ENCODE measurements at regions of chr16 and their contacts with region 1.

Region 1: DNA sequence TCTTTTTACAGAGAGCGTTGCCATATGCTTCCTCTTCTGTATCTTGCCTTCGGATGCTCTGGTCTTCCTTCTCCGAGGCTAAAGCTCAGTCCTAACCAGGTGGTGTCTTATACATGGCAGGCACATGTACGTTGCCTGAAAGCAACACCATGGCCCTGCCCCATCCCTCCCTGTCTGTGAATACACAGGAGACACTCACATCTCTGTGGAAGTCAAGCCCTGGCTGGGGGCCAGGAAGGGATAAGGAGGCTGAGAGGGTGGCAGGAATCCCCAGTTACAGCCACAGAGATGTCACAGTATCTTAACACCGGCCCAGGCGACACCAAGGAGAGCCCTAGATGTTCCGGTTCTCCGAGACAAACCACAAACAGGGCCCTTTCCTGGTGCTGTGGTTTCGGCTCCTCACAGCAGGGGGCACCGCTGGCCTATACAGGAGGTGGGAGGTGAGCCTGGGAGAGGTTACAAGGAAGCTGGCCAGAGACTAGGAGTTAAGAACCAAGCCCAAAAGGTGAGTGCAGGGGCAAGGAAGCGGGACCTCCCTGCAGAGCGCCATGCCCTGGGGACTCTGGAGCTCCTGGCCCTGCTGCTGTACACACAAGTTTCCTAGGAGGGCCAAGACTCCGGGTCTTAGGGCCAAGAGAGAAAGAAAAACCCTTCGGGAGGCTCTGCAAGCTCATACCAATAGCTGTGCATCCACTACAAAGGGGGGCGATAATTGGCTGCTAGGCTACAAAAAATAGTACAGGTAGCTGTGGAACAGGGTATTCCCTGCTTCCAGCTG is 41.7 kb downstream of the SRL start:
- DNase-seq: peak; percentile 73 to 88
- H3K4me3 ChIP-seq: no peak overlapping the region
- H3K27ac ChIP-seq: no peak overlapping the region
- H3K4me1 ChIP-seq: peaks cover 7% of the 10 kb centered on the region
- H3K27me3 ChIP-seq: no peaks in the 10 kb centered on the region
- CTCF ChIP-seq: peak; percentile 70

Region 2: GRCh38 chr16:3715430-3715829 is 484.8 kb before region 1 on chr16:
- CTCF ChIA-PET with region 1: interaction called, 17 read pairs
- POLR2A ChIA-PET with region 1: no interaction called
- intact Hi-C with region 1: no loop called
- DNase-seq: no peak
- H3K4me3 ChIP-seq: no peak overlapping the region
- H3K27ac ChIP-seq: no peak overlapping the region
- H3K4me1 ChIP-seq: peaks cover 10% of the 10 kb centered on the region
- H3K27me3 ChIP-seq: no peaks in the 10 kb centered on the region
- CTCF ChIP-seq: no peak

Region 3: GRCh38 chr16:4064950-4065352 is 135.2 kb before region 1 on chr16:
- CTCF ChIA-PET with region 1: no interaction called
- POLR2A ChIA-PET with region 1: no interaction called
- intact Hi-C with region 1: no loop called
- DNase-seq: no peak
- H3K4me3 ChIP-seq: no peak overlapping the region
- H3K27ac ChIP-seq: no peak overlapping the region
- H3K4me1 ChIP-seq: no peaks in the 10 kb centered on the region
- H3K27me3 ChIP-seq: no peaks in the 10 kb centered on the region
- CTCF ChIP-seq: no peak

Region 4: DNA sequence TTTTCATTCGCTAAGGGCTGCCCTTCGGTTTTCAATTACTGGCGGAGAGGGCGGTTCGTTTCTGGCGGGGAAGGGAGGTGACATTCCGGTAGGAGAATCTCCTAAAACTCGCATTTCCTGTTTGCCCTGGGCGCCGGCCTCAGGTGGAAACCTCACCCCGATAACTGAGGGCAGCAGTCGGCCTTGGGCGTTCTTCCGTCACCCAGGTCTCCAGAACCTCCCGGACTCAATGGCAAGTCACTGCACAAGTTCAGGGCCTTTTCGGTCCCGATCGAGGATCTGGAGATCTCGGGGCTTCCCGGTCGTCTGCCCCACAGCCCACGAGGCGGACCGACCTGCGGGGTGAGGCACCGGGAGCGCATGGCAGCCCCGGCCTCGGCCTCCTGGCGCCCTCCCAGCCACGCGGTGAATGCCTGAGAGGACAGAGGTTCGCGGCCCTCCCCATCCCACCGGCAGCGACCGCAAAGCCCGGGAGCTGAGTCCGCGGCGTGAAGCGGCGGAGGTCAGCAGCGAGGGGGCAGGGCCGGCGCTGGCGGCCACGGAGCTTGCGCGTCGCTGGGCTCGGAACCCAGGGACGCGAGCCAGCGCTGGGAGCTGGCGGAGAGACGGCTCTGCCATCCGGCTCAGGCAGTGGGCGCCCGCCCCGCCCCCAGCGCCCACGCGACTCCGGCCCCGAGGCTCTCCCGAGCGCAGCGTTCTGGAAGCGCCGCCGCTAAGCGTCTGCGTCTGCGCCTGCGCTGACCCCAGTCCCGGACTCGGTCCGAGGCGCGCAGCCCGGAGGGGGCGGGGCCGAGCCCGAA is 16.8 kb before region 1 on chr16:
- CTCF ChIA-PET with region 1: interaction called, 10 read pairs
- POLR2A ChIA-PET with region 1: no interaction called
- intact Hi-C with region 1: no loop called
- DNase-seq: peak; percentile 92 to 97
- H3K4me3 ChIP-seq: peak overlapping the region; percentile 80
- H3K27ac ChIP-seq: peak overlapping the region; percentile 95
- H3K4me1 ChIP-seq: peaks cover 23% of the 10 kb centered on the region
- H3K27me3 ChIP-seq: no peaks in the 10 kb centered on the region
- CTCF ChIP-seq: no peak

Region 5: GRCh38 chr16:4271176-4272066 is 71.2 kb after region 1 on chr16:
- CTCF ChIA-PET with region 1: interaction called, 11 read pairs
- POLR2A ChIA-PET with region 1: interaction called, 4 read pairs
- intact Hi-C with region 1: no loop called
- DNase-seq: peak; percentile 82 to 94
- H3K4me3 ChIP-seq: peak overlapping the region; percentile 81
- H3K27ac ChIP-seq: peak overlapping the region; percentile 92
- H3K4me1 ChIP-seq: peaks cover 7% of the 10 kb centered on the region
- H3K27me3 ChIP-seq: no peaks in the 10 kb centered on the region
- CTCF ChIP-seq: no peak

Region 6: DNA sequence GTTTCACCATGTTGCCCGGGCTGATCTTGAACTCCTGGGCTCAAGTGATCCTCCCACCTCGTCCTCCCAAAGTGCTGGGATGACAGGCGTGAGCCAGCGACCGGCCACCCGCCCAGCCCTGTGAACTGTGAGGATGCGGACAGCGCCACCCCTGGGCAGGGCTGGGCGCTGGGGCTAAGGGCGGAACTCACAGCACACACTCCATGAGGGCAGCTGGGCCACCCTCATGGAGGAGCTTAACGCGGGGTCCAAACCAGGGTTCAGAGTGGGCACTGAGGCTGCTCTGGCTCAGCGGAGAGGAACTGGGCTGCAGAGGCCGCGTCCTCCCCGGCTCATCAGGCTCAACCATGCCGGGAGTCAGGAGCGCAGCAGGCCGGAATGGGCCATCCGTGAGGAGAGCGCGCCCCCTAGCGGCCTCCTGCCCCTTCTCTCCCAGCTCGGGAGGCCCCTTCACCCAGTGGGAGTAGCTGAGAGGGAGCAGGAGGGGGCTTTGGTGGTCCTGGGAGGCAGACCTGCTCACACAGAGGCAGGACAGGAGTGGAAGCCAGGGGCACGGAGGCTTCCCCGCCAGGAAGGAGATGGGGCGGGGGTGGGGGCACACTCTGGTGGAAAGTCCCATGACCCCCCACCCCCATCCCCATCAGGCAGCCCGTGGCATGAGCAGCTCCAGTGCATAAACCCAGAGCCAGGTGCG is 202.4 kb after region 1 on chr16:
- CTCF ChIA-PET with region 1: interaction called, 16 read pairs
- POLR2A ChIA-PET with region 1: no interaction called
- intact Hi-C with region 1: loop called (anchors 2 kb)
- DNase-seq: peak in 1 of 2 experiments; percentile 87
- H3K4me3 ChIP-seq: no peak overlapping the region
- H3K27ac ChIP-seq: no peak overlapping the region
- H3K4me1 ChIP-seq: peaks cover 4% of the 10 kb centered on the region; the same call in 1 of the 2 replicates
- H3K27me3 ChIP-seq: no peaks in the 10 kb centered on the region
- CTCF ChIP-seq: peak; percentile 93

Measured in PC-9 (cell line).